CD14-positive monocyte (primary cell): ENCODE measurements at regions of chr19 and their contacts with region 1.

Region 1: GRCh38 chr19:2944775-2945574 is at the start of gene ZNF77:
- DNase-seq: peak; percentile 98 to 100 (median 98)
- H3K4me3 ChIP-seq: peak within 1 kb of the TSS; percentile 73 to 86 (median 76)
- H3K4me3 Mint-ChIP-seq: peak within 1 kb of the TSS; percentile 85 to 94
- H3K27ac ChIP-seq: peak within 1 kb of the TSS; percentile 82 to 91
- H3K27ac Mint-ChIP-seq: peak within 1 kb of the TSS; percentile 95 to 99 (median 97)
- H3K4me1 ChIP-seq: peaks cover 24 to 29% of the 10 kb centered on the region in 2 donors
- H3K4me1 Mint-ChIP-seq: peaks cover 25% of the 10 kb centered on the region
- H3K27me3 ChIP-seq: no peaks in the 10 kb centered on the region
- H3K27me3 Mint-ChIP-seq: peaks cover 0 to 11% (median 0%) of the 10 kb centered on the region in 3 donors
- CTCF ChIP-seq: no peak
- polyA plus RNA-seq, gene ZNF77: 0.30 to 2.7 (median 1.0) TPM

Region 2: DNA sequence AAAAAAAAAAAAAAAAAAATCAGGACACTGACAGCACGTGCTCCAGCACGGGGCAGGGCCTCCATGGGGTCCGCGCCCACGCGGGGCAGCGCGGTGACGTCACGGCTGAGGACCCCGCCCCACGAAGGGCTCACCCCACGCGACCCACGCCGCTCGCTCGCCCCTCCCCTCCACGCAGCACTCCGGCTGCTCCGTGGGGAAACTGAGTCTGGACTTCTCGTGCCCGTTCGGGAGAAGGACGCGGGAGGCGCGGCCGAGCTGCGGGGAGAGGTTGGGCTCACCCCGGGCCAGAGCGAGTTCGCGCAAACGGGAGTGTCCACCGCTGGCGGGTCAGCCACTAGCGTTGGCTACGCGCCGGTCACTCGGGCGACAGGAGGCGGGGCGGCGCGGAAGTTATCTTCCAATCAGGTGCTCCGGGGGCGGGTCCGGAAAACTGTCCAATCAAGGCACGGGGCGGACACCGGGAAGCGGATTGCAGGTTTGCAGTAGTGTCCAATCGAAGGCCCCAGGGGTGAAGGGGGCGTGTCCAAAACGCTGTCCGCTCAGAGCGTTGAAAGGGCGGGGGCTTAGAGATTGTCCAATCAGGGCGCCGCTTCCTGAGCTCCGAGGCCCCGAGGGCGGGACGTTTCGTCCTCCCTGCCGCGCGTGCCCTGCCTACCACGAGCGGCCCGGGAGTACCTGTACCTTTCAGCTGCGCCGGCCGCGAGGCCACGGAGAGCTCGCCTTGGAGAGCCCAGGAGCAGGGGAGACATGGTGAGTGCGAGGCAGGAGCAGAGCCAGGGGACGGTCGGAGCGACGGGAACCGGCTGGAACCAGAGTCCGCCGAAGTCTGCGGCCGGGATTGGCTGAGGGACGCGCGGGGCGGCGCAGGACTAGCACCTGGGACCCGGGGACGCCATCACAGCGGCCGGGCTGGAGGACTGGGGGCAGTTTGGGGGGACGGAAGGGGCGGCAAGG is 44.4 kb before region 1 on chr19 and contains the start of gene ZNF57:
- intact Hi-C with region 1: loop called (anchors 5 kb)
- DNase-seq: peak; percentile 99
- H3K4me3 ChIP-seq: peak within 1 kb of the TSS; percentile 64 to 85 (median 83)
- H3K4me3 Mint-ChIP-seq: peak within 1 kb of the TSS; percentile 93 to 95
- H3K27ac ChIP-seq: peak within 1 kb of the TSS; percentile 63 to 76
- H3K27ac Mint-ChIP-seq: peak within 1 kb of the TSS; percentile 75 to 94 (median 87)
- H3K4me1 ChIP-seq: peaks cover 16% of the 10 kb centered on the region in 2 donors
- H3K4me1 Mint-ChIP-seq: peaks cover 12% of the 10 kb centered on the region
- H3K27me3 ChIP-seq: no peaks in the 10 kb centered on the region
- H3K27me3 Mint-ChIP-seq: peaks cover 0 to 7% (median 3%) of the 10 kb centered on the region in 3 donors
- CTCF ChIP-seq: no peak
- polyA plus RNA-seq, gene ZNF57: 1.4 to 2.1 (median 1.9) TPM